Activated naive CD4-positive, alpha-beta T cell treated with anti-CD3 and anti-CD28 coated beads, Interleukin-2, amount 10 ng/mL, durations not matched to agents 7 days and 5 days (primary cell): ENCODE measurements at regions of chr17 and their contacts with region 1.

Region 1: DNA sequence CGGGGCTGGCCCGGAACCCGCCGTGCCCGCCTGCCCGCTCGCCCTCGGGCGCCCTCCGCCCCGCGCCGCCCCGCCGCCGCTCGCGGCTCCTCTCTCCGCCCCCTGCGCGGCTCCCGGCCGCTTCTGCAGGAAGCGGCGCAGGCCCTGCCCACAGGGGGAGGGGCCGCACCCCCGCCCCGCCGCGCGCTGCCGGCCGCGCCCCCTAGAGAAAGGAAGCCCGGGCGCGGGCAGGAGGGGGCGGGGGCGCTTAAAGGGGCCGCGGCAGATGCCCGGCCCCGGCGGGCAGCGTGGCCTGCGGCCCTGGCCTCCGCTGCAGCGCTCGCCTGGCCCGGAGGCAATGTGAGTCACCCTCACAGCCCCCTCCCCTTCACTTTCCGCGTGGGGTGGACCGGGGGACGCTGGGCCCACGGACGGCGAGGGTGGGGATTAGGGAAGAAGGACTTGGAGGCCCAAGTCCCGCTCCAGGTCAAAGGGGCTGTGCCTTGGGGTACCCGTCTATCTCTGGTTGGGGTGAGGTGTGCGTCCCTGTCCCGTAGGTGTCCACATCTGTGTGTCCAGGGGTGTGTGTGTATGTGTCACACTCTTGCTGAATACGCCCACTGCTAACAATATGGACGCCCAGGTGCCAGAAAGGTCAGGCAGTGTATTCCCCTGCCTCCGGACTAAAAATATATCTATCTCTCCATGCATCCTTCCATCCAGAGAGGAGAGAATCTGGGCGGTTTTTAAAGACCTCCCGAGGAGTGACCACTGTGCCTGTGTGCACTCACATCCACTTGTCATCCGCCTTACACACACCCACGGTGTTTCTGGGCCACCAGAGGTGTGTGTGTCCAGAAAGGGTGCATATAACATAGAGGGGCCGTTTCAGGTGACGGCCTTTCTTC is at the start of gene GIT1:
- DNase-seq: peak; percentile 87
- H3K4me3 Mint-ChIP-seq: peak within 1 kb of the TSS; percentile 93
- H3K27ac Mint-ChIP-seq: peak within 1 kb of the TSS; percentile 89
- H3K4me1 Mint-ChIP-seq: peaks cover 73% of the 10 kb centered on the region
- H3K27me3 Mint-ChIP-seq: peaks cover 7% of the 10 kb centered on the region

Region 2: GRCh38 chr17:29568331-29569244 is 21.2 kb before region 1 on chr17 and contains the start of gene TP53I13:
- CTCF ChIA-PET with region 1: interaction called, 23 read pairs
- DNase-seq: peak; percentile 93
- H3K4me3 Mint-ChIP-seq: peak within 1 kb of the TSS; percentile 93
- H3K27ac Mint-ChIP-seq: peak within 1 kb of the TSS; percentile 99
- H3K4me1 Mint-ChIP-seq: peaks cover 40% of the 10 kb centered on the region
- H3K27me3 Mint-ChIP-seq: peaks cover 4% of the 10 kb centered on the region